ENCODE measurements at regions of chr1 and their contacts with region 1.

Region 1: DNA sequence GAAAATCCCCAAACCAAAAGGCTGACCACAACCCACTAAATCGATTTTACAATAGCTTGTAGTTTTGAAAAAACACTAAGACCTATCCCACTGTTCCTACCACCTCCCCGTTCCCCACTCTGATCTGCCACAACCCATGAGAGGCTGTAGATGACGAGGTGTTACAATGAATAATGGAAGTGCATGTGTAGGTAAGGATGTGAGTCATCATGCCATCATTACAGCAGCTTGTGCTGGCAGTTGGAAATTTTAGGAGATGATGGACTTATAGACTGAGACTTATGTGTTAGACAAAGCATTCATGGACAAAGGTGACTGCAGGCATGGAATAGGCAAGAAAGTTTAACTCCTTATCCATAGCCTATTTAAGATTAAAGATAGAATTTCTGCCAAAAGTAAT is 184.7 kb upstream of the CACYBP start:
- DNase-seq: no peak
- ATAC-seq: peak; percentile 14
- H3K4me3 ChIP-seq: peak overlapping the region in 1 of 5 experiments; percentile 34
- H3K4me3 Mint-ChIP-seq: no peak overlapping the region
- H3K27ac ChIP-seq: no peak overlapping the region
- H3K27ac Mint-ChIP-seq: peak overlapping the region; percentile 62
- H3K4me1 ChIP-seq: peaks cover 14 to 19% of the 10 kb centered on the region in 2 donors
- H3K4me1 Mint-ChIP-seq: peaks cover 24% of the 10 kb centered on the region
- H3K27me3 ChIP-seq: no peaks in the 10 kb centered on the region
- H3K27me3 Mint-ChIP-seq: no peaks in the 10 kb centered on the region
- CTCF ChIP-seq: no peak

Region 2: DNA sequence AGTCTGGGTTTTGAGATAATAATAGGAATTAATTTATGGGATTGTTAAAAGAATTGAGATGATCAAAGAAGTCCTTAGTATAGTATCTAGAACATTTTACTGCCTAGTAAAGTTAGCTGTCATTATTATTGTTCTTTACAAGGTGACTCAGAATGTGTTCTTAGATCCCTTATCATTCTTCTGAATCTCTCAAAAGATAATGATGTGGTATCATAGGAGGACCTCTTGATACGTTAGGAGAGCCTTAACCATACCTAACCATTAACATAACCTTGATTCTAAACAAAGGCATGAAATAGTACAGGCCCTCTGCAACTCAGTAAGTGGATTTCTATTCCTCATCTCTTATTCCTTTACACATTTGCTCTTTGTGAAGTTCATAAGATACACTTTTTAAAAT is 61.9 kb before region 1 on chr1:
- CTCF ChIA-PET with region 1: no interaction called
- POLR2A ChIA-PET with region 1: no interaction called
- intact Hi-C with region 1: no loop called
- DNase-seq: no peak
- ATAC-seq: no peak
- H3K4me3 ChIP-seq: no peak overlapping the region
- H3K4me3 Mint-ChIP-seq: no peak overlapping the region
- H3K27ac ChIP-seq: no peak overlapping the region
- H3K27ac Mint-ChIP-seq: no peak overlapping the region
- H3K4me1 ChIP-seq: no peaks in the 10 kb centered on the region
- H3K4me1 Mint-ChIP-seq: no peaks in the 10 kb centered on the region
- H3K27me3 ChIP-seq: no peaks in the 10 kb centered on the region
- H3K27me3 Mint-ChIP-seq: no peaks in the 10 kb centered on the region
- CTCF ChIP-seq: no peak

Region 3: GRCh38 chr1:174775614-174776013 is 39.4 kb before region 1 on chr1:
- CTCF ChIA-PET with region 1: no interaction called
- POLR2A ChIA-PET with region 1: no interaction called
- intact Hi-C with region 1: loop called (anchors 5 kb)
- DNase-seq: no peak
- ATAC-seq: no peak
- H3K4me3 ChIP-seq: no peak overlapping the region
- H3K4me3 Mint-ChIP-seq: no peak overlapping the region
- H3K27ac ChIP-seq: no peak overlapping the region
- H3K27ac Mint-ChIP-seq: no peak overlapping the region
- H3K4me1 ChIP-seq: peaks cover 7 to 10% of the 10 kb centered on the region in 2 donors
- H3K4me1 Mint-ChIP-seq: peaks cover 28% of the 10 kb centered on the region
- H3K27me3 ChIP-seq: no peaks in the 10 kb centered on the region
- H3K27me3 Mint-ChIP-seq: no peaks in the 10 kb centered on the region
- CTCF ChIP-seq: no peak

Measured in B cell (primary cell).